ENCODE measurements at regions of chr2 and their contacts with region 1.

Region 1: GRCh38 chr2:196101325-196101991 is 32.8 kb upstream of the DNAH7 start:
- DNase-seq: peak; percentile 80
- ATAC-seq: peak; percentile 96
- H3K4me3 ChIP-seq: no peak overlapping the region
- H3K27ac ChIP-seq: peak overlapping the region; percentile 34
- H3K4me1 ChIP-seq: peaks cover 24% of the 10 kb centered on the region
- H3K27me3 ChIP-seq: no peaks in the 10 kb centered on the region
- CTCF ChIP-seq: peak in 1 of 3 experiments; percentile 14; a peak in 1 of 6 replicates
- EP300 ChIP-seq: peak; percentile 57 to 74
- POLR2A ChIP-seq: 0 out of 2 replicates have a peak, but pooled peaks have one; percentile 16
- RAD21 ChIP-seq: peak; percentile 26; the same call in 1 of the 2 replicates

Region 2: GRCh38 chr2:196088203-196088602 is 13.3 kb before region 1 on chr2:
- CTCF ChIA-PET with region 1: interaction called, 10 read pairs
- POLR2A ChIA-PET with region 1: no interaction called
- RAD21 ChIA-PET with region 1: interaction called, 11 read pairs
- SMC1A ChIA-PET with region 1: interaction called, 147 read pairs
- in situ Hi-C with region 1: no loop called
- intact Hi-C with region 1: no loop called
- DNase-seq: no peak
- ATAC-seq: no peak
- H3K4me3 ChIP-seq: no peak overlapping the region
- H3K27ac ChIP-seq: no peak overlapping the region
- H3K4me1 ChIP-seq: peaks cover 4% of the 10 kb centered on the region; the same call in 1 of the 2 replicates
- H3K27me3 ChIP-seq: no peaks in the 10 kb centered on the region
- CTCF ChIP-seq: no peak
- EP300 ChIP-seq: no peak
- POLR2A ChIP-seq: no peak
- RAD21 ChIP-seq: no peak

Region 3: DNA sequence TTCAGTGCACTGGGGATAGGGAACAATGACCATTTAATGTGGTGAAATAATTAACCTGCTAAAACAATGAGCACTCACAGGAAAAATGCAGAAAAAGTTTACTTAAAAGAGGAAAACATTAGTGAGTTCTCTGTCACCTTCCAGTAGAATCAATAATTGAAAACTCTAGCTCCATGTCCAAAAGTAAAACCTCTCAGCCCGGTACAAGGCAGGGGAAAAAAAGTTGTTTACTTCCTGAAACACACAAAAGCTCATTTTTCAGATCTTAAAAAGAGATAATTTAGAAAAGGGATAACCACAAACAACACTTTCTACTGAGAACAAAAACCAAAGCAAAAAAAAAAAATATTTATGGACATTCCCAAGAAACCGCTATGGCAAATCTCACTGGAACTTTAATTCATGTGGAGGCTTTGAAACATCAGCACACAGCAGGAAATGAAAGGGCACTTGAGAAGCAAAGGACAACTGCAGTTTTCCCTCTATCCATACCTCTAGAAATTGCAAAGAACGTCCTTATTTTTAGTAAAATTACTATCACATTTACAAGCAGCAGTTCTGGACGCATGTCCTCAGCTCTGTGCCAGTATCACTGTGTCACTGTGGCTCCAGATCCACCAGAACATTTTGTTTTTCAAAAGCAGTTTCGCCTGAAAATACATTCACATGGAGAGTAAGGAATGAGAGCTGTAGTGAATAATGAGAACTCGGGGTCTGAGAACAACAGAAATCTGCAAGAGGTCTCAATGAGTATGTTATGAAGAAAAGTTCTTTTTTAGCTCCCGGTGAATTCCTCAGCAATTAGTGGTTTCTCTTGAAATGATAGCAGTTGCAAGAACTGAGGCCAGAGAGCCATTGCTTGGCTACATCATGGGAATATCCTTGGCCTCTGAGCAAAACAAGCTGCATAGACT is 11.9 kb after region 1 on chr2:
- CTCF ChIA-PET with region 1: interaction called, 3 read pairs
- POLR2A ChIA-PET with region 1: interaction called, 4 read pairs
- RAD21 ChIA-PET with region 1: interaction called, 4 read pairs
- SMC1A ChIA-PET with region 1: interaction called, 15 read pairs
- in situ Hi-C with region 1: no loop called
- intact Hi-C with region 1: no loop called
- DNase-seq: no peak
- ATAC-seq: no peak
- H3K4me3 ChIP-seq: no peak overlapping the region
- H3K27ac ChIP-seq: no peak overlapping the region
- H3K4me1 ChIP-seq: 0 out of 2 replicates have a peak, but pooled peaks cover 2% of the 10 kb centered on the region
- H3K27me3 ChIP-seq: no peaks in the 10 kb centered on the region
- CTCF ChIP-seq: no peak
- EP300 ChIP-seq: no peak
- POLR2A ChIP-seq: no peak
- RAD21 ChIP-seq: no peak

Region 4: GRCh38 chr2:196601430-196602306 is 500.2 kb after region 1 on chr2:
- CTCF ChIA-PET with region 1: no interaction called
- POLR2A ChIA-PET with region 1: no interaction called
- RAD21 ChIA-PET with region 1: no interaction called
- SMC1A ChIA-PET with region 1: no interaction called
- in situ Hi-C with region 1: no loop called
- intact Hi-C with region 1: no loop called
- DNase-seq: no peak
- ATAC-seq: no peak
- H3K4me3 ChIP-seq: no peak overlapping the region
- H3K27ac ChIP-seq: no peak overlapping the region
- H3K4me1 ChIP-seq: no peaks in the 10 kb centered on the region
- H3K27me3 ChIP-seq: no peaks in the 10 kb centered on the region
- CTCF ChIP-seq: no peak
- EP300 ChIP-seq: no peak
- POLR2A ChIP-seq: no peak
- RAD21 ChIP-seq: no peak